HCT116 (cell line): ENCODE measurements at regions of chr9 and their contacts with region 1.

Region 1: GRCh38 chr9:136694236-136694942 is 7.1 kb upstream of the AGPAT2 start:
- DNase-seq: peak; percentile 43
- ATAC-seq: peak; percentile 82
- H3K4me3 ChIP-seq: peak overlapping the region; percentile 31 to 58
- H3K27ac ChIP-seq: peak overlapping the region; percentile 92
- H3K4me1 ChIP-seq: peaks cover 50 to 77% of the 10 kb centered on the region in 2 experiments
- H3K27me3 ChIP-seq: no peaks in the 10 kb centered on the region
- CTCF ChIP-seq: peak in 2 of 3 experiments; percentile 86 to 87; a peak in 4 of 6 replicates
- POLR2A ChIP-seq: no peak
- RAD21 ChIP-seq: no peak

Region 2: DNA sequence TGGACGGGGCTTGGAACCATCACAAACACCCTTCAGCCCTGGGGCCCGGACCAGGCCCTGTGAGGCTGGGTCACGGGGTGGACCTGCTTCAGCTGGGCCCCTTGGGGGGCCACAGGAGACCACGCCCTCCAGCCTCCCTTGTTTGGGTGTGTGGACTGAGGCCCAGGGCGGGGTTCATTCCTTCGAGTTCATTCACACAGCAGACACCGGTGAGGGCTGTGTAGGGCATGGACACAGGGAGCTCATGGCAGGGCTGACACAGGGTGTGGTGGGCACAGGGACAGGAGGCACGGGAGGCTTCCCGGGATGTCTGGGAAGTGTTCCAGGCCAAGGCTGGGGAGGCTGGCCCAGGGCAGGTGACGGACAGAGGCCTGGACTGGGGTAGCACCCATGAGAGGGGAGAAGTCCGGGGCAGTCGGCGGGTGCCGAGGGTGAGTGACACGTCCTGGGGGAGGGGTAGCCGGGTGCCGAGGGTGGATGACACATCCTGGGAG is 339.8 kb before region 1 on chr9:
- CTCF ChIA-PET with region 1: no interaction called
- POLR2A ChIA-PET with region 1: no interaction called
- RAD21 ChIA-PET with region 1: no interaction called
- intact Hi-C with region 1: no loop called
- DNase-seq: no peak
- ATAC-seq: peak; percentile 59
- H3K4me3 ChIP-seq: peak overlapping the region in 1 of 2 experiments; percentile 20; a peak in 1 of 4 replicates
- H3K27ac ChIP-seq: peak overlapping the region; percentile 49; the same call in 1 of the 2 replicates
- H3K4me1 ChIP-seq: peaks cover 9 to 22% of the 10 kb centered on the region in 2 experiments; a peak in 3 of 4 replicates
- H3K27me3 ChIP-seq: no peaks in the 10 kb centered on the region
- CTCF ChIP-seq: no peak
- POLR2A ChIP-seq: no peak
- RAD21 ChIP-seq: no peak

Region 3: GRCh38 chr9:136644598-136645351 is 49.6 kb before region 1 on chr9:
- CTCF ChIA-PET with region 1: no interaction called
- POLR2A ChIA-PET with region 1: no interaction called
- RAD21 ChIA-PET with region 1: interaction called in 1 of 2 experiments, 4 read pairs
- intact Hi-C with region 1: loop called (anchors 2 kb)
- DNase-seq: peak; percentile 42
- ATAC-seq: peak; percentile 99
- H3K4me3 ChIP-seq: peak overlapping the region in 1 of 2 experiments; percentile 31; a peak in 1 of 4 replicates
- H3K27ac ChIP-seq: peak overlapping the region; percentile 46; the same call in 1 of the 2 replicates
- H3K4me1 ChIP-seq: peaks cover 7 to 14% of the 10 kb centered on the region in 2 experiments
- H3K27me3 ChIP-seq: no peaks in the 10 kb centered on the region
- CTCF ChIP-seq: peak; percentile 74 to 97 (median 95)
- POLR2A ChIP-seq: no peak
- RAD21 ChIP-seq: peak; percentile 90

Region 4: DNA sequence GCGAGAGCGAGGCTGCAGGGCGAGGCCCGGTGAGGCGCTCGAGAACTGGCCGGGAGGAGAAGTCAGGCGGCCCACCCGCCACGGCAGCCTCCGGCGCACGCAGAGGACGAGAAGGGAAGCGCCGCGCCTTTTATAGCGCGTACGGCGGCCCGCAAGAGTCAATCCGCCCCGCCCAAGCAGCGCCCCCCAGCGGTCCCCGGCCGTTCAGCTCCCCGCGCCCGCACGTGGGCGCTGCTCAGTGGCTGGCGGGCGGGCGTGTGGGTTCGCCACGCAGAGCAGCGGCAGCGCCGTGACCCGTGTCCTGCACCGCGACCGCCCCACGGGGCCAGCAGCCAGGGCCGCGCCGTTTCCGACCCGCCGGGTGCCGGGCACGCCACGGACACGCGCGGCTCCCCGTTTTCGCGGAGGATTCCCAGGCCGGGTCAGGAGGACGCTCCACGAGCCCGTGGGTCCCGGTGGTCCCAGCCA is 33.7 kb after region 1 on chr9:
- CTCF ChIA-PET with region 1: interaction called, 3 read pairs
- POLR2A ChIA-PET with region 1: interaction called, 6 read pairs
- RAD21 ChIA-PET with region 1: interaction called in 1 of 2 experiments, 3 read pairs
- intact Hi-C with region 1: loop called (anchors 1 kb)
- DNase-seq: peak; percentile 60
- ATAC-seq: peak; percentile 47
- H3K4me3 ChIP-seq: peak overlapping the region; percentile 93 to 100
- H3K27ac ChIP-seq: peak overlapping the region; percentile 97
- H3K4me1 ChIP-seq: peaks cover 13 to 48% of the 10 kb centered on the region in 2 experiments
- H3K27me3 ChIP-seq: no peaks in the 10 kb centered on the region
- CTCF ChIP-seq: peak in 2 of 3 experiments; percentile 71 to 85; a peak in 4 of 6 replicates
- POLR2A ChIP-seq: peak; percentile 97
- RAD21 ChIP-seq: no peak